Naive thymus-derived CD4-positive, alpha-beta T cell (primary cell): ENCODE measurements at regions of chr1 and their contacts with region 1.

Region 1: DNA sequence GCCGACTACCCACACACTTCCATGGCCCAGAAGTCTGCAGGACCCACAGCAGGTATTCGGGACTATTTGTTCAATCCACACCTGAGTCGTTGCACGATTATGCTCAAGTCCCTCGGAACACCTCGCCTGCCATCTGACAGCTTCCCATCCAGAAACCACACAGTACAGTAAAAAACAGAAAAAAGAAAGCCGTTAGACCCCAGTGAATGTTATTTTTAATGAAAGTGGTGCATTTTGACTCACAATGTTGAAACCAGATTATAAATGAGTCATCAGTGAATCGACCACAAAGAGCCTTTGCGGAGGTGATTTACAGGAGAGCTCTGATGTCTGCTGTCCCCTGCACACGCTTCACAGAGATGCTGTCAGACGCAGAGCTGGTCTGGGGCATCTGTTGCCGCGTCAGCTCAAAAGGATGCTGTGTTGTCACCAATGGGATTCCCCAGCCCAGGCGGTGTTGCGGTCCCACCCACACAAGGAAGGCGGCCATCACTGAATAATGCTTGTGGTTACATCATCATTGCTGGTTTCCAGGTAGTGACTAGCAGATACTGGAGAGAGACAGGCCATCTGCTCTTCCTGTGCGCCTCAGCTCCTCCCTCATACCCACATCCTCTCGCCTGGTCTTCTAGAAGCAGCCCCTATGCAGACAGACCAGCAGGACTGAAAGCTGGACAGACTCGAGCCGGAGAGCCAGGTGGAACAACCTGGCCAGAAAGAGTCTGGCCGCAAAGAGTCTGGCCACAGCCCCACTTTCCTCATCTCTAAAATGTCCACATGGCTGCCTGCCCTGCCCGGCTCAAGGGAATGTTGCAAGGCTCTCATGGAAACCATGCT is 116.8 kb downstream of the TOMM20 start:
- DNase-seq: peak; percentile 71 to 95 (median 93)
- ATAC-seq: peak; percentile 95
- H3K4me3 ChIP-seq: peak overlapping the region; percentile 48
- H3K4me3 Mint-ChIP-seq: peak overlapping the region; percentile 72 to 84 (median 80)
- H3K27ac ChIP-seq: peak overlapping the region; percentile 91
- H3K27ac Mint-ChIP-seq: peak overlapping the region; percentile 91 to 98 (median 97)
- H3K4me1 ChIP-seq: peaks cover 27 to 34% of the 10 kb centered on the region in 2 donors
- H3K4me1 Mint-ChIP-seq: peaks cover 36 to 79% (median 67%) of the 10 kb centered on the region in 7 donors
- H3K27me3 ChIP-seq: no peaks in the 10 kb centered on the region
- H3K27me3 Mint-ChIP-seq: peaks cover 0 to 5% (median 0%) of the 10 kb centered on the region in 5 donors

Region 2: DNA sequence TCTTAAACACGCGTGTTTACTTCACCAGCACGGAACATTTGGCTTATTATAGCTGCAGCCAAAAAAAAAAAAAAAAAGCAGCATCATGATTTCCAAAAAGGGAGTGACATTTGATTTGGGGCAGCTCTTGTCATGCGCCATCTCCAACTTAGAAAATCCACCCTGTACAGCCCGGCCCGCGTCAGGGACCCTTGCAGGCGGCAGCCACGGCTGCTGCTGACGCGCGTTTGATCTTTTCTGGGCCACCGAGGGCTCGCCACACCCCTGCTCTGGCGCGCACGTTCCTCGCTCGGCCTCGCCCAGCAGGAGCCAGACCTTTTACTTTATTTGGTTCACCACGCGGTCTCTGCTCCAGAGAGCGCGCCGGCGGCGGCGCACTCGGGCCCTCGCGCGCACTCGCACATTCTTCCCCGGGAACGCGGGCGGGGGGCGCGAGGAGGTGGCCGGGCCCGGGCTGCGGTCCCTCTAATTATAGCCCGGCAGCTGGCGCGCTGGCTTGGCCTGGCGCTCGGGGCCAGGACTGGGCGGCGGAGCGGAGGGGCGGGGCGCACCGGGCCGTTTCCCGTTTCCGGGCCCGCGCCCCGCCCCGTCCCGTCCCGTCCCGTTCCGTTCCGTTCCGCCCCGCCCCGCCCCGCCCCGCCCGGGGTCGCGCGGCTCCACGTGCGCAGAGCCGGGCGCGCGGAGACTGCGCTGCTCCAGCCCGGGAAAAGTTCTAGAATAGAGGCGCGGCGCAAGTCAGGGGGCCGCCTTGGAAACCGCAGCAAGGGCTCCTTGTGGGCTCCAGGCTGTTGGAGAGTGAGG is 412.0 kb before region 1 on chr1:
- CTCF ChIA-PET with region 1: no interaction called
- POLR2A ChIA-PET with region 1: interaction called, 4 read pairs
- intact Hi-C with region 1: loop called (anchors 1 to 2 kb)
- DNase-seq: peak; percentile 52 to 88 (median 62)
- ATAC-seq: peak; percentile 74
- H3K4me3 ChIP-seq: peak overlapping the region; percentile 61
- H3K4me3 Mint-ChIP-seq: peak overlapping the region; percentile 75 to 97 (median 89)
- H3K27ac ChIP-seq: peak overlapping the region; percentile 96
- H3K27ac Mint-ChIP-seq: peak overlapping the region; percentile 87 to 99 (median 95)
- H3K4me1 ChIP-seq: peaks cover 51 to 54% of the 10 kb centered on the region in 2 donors
- H3K4me1 Mint-ChIP-seq: peaks cover 24 to 68% (median 56%) of the 10 kb centered on the region in 7 donors
- H3K27me3 ChIP-seq: no peaks in the 10 kb centered on the region
- H3K27me3 Mint-ChIP-seq: no peaks in the 10 kb centered on the region

Region 3: GRCh38 chr1:234772345-234773147 is 239.3 kb before region 1 on chr1:
- CTCF ChIA-PET with region 1: no interaction called
- POLR2A ChIA-PET with region 1: no interaction called
- intact Hi-C with region 1: loop called (anchors 1 kb)
- DNase-seq: peak; percentile 42 to 88 (median 64)
- ATAC-seq: peak; percentile 88
- H3K4me3 ChIP-seq: peak overlapping the region; percentile 7
- H3K4me3 Mint-ChIP-seq: peak overlapping the region; percentile 55 to 83 (median 74)
- H3K27ac ChIP-seq: peak overlapping the region; percentile 64
- H3K27ac Mint-ChIP-seq: peak overlapping the region; percentile 79 to 95 (median 90)
- H3K4me1 ChIP-seq: peaks cover 14 to 53% of the 10 kb centered on the region in 2 donors
- H3K4me1 Mint-ChIP-seq: peaks cover 39 to 69% (median 54%) of the 10 kb centered on the region in 7 donors
- H3K27me3 ChIP-seq: no peaks in the 10 kb centered on the region
- H3K27me3 Mint-ChIP-seq: no peaks in the 10 kb centered on the region

Region 4: DNA sequence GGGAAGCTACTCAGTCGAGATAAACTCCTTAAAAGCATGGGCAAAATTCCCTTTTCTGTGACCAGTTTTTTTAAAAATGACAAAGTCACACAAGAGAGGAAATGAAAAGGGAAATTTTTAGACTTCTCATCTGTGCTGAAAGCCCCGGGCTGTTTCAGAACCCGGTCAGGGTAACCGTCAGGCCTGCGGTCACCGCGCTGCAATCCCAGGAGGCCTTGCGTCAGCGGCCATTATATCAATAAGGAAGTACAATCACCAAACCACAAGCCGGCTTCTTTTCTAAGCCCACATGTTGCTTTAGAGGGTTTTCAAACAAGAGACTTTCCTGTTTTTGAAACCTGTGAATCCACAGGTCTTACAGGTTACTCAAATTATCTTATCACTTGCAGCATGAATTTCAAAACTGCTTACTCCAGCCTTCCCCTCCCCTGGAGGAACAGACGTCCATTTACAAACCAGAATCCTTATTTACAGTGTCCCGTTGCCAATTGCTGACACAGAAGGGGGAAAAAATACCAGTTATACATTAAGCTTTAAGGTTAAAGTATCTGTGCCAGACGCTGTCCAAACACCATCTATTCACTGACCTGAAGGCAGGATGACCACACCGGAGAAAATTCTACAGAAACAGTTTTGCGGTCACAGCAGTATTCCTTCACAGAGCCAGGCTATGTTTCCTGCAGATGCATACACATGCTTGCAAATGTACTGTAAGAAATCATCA is 48.5 kb before region 1 on chr1:
- CTCF ChIA-PET with region 1: no interaction called
- POLR2A ChIA-PET with region 1: interaction called, 4 read pairs
- intact Hi-C with region 1: loop called (anchors 1 kb)
- DNase-seq: peak; percentile 55 to 90 (median 75)
- ATAC-seq: peak; percentile 93
- H3K4me3 ChIP-seq: peak overlapping the region; percentile 41
- H3K4me3 Mint-ChIP-seq: peak overlapping the region; percentile 68 to 87 (median 80)
- H3K27ac ChIP-seq: peak overlapping the region; percentile 79
- H3K27ac Mint-ChIP-seq: peak overlapping the region; percentile 88 to 97 (median 93)
- H3K4me1 ChIP-seq: peaks cover 36 to 55% of the 10 kb centered on the region in 2 donors
- H3K4me1 Mint-ChIP-seq: peaks cover 55 to 75% (median 69%) of the 10 kb centered on the region in 7 donors
- H3K27me3 ChIP-seq: no peaks in the 10 kb centered on the region
- H3K27me3 Mint-ChIP-seq: no peaks in the 10 kb centered on the region

Region 5: DNA sequence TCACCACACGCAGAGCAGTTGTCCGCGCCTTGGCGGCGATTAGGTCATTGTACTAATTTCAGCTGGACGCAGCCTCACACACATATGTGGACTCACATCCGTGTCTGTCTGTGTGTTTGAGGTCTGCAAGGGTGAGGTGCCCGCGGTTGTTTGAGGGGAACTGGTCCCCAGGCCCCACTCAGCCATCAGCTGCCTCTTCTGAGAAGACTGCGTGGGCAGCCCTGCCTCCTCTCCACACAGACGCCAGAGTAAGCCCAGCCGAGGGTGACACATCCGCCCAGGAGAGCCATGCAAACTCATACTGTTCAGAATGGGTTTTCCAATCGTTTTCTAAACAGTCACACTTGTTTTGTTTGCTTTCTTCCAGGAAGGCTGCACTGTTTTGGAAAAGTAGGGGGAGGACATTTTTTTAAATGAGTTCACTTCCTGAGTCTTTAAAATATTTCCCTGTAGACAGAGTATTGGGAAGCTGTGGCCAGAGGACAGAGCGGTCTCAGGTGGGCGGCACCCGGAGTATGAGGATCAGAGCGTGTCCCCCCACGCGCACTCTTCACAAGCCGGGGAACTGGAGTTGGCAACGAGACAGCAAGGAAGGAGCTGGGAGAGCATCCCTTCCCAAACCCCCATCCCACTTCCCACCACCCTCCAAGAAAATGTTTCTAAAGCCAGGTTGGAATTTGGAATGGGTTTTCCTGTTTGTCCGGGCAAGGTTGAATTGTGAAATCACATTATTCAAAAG is 63.5 kb after region 1 on chr1:
- CTCF ChIA-PET with region 1: no interaction called
- POLR2A ChIA-PET with region 1: no interaction called
- intact Hi-C with region 1: loop called in 1 of 2 experiments (anchors 5 kb)
- DNase-seq: peak in 1 of 9 donors; percentile 76
- ATAC-seq: peak; percentile 44
- H3K4me3 ChIP-seq: peak overlapping the region; percentile 31
- H3K4me3 Mint-ChIP-seq: peak overlapping the region in 1 of 10 donors; percentile 65
- H3K27ac ChIP-seq: no peak overlapping the region
- H3K27ac Mint-ChIP-seq: peak overlapping the region in 1 of 9 donors; percentile 90
- H3K4me1 ChIP-seq: peaks cover 0 to 10% of the 10 kb centered on the region in 2 donors
- H3K4me1 Mint-ChIP-seq: peaks cover 0 to 38% (median 6%) of the 10 kb centered on the region in 7 donors
- H3K27me3 ChIP-seq: no peaks in the 10 kb centered on the region
- H3K27me3 Mint-ChIP-seq: no peaks in the 10 kb centered on the region